Activated CD8-positive, alpha-beta T cell treated with anti-CD3 and anti-CD28 coated beads for 36 hours (primary cell): ENCODE measurements at regions of chr14 and their contacts with region 1.

Region 1: GRCh38 chr14:73058224-73058921 is at the start of gene RBM25:
- DNase-seq: peak; percentile 98
- ATAC-seq: peak; percentile 96
- H3K4me3 Mint-ChIP-seq: no peak within 1 kb of the TSS
- H3K27ac Mint-ChIP-seq: no peak within 1 kb of the TSS
- H3K4me1 Mint-ChIP-seq: peaks cover 29% of the 10 kb centered on the region
- H3K27me3 Mint-ChIP-seq: no peaks in the 10 kb centered on the region
- CTCF ChIP-seq: no peak
- total RNA-seq, gene RBM25: 101 to 104 TPM

Region 2: GRCh38 chr14:72812292-72812911 is 246.0 kb before region 1 on chr14:
- CTCF ChIA-PET with region 1: no interaction called
- POLR2A ChIA-PET with region 1: no interaction called
- intact Hi-C with region 1: no loop called
- DNase-seq: no peak
- ATAC-seq: no peak
- H3K4me3 Mint-ChIP-seq: no peak overlapping the region
- H3K27ac Mint-ChIP-seq: no peak overlapping the region
- H3K4me1 Mint-ChIP-seq: peaks cover 41% of the 10 kb centered on the region
- H3K27me3 Mint-ChIP-seq: no peaks in the 10 kb centered on the region
- CTCF ChIP-seq: no peak

Region 3: DNA sequence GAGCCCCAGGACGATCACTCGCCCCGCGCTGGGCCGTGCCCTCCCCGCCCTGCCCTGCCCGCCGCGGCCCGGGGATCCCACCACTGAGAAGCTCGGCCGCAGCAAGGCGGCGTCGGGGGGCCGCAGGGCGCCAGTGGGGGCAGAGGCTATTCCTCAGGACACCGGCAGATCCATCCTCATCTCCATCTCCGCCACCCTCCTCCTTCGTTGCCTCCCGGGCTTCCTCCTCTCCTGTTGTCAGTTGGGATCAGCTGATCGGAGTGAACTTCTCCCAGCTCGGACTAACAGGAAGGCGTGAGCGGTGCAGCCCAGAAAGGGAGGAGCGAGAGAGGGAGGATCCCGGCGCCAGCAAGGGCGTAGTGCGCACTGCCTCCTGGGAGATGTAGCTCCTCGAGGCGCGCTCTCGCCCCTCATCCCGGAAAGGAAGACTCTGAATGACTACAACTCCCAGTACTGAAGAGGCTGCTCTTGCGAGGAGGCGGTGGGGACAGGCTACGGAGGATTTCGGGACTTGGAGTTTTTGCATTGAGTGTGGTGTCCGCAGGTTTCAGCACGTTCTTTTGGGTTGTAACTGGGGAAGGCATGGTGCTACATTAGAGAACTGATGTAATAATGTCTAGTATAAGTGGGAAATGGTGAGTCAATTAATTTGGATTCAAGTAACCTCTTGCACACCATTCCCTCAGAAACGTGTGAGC is 31.4 kb before region 1 on chr14 and contains the start of gene ZFYVE1:
- CTCF ChIA-PET with region 1: interaction called, 4 read pairs
- POLR2A ChIA-PET with region 1: interaction called, 29 read pairs
- intact Hi-C with region 1: loop called (anchors 1 kb)
- DNase-seq: peak; percentile 97
- ATAC-seq: peak; percentile 99
- H3K4me3 Mint-ChIP-seq: peak within 1 kb of the TSS; percentile 91
- H3K27ac Mint-ChIP-seq: peak within 1 kb of the TSS; percentile 91
- H3K4me1 Mint-ChIP-seq: peaks cover 33% of the 10 kb centered on the region
- H3K27me3 Mint-ChIP-seq: no peaks in the 10 kb centered on the region
- CTCF ChIP-seq: no peak
- total RNA-seq, gene ZFYVE1: 7.2 to 10.4 TPM

Region 4: GRCh38 chr14:73069585-73069984 is 11.2 kb after region 1 on chr14:
- CTCF ChIA-PET with region 1: no interaction called
- POLR2A ChIA-PET with region 1: interaction called, 27 read pairs
- intact Hi-C with region 1: no loop called
- DNase-seq: no peak
- ATAC-seq: no peak
- H3K4me3 Mint-ChIP-seq: no peak overlapping the region
- H3K27ac Mint-ChIP-seq: no peak overlapping the region
- H3K4me1 Mint-ChIP-seq: peaks cover 28% of the 10 kb centered on the region
- H3K27me3 Mint-ChIP-seq: no peaks in the 10 kb centered on the region
- CTCF ChIP-seq: no peak

Region 5: GRCh38 chr14:73105050-73105449 is 46.7 kb after region 1 on chr14:
- CTCF ChIA-PET with region 1: interaction called, 5 read pairs
- POLR2A ChIA-PET with region 1: interaction called, 12 read pairs
- intact Hi-C with region 1: no loop called
- DNase-seq: no peak
- ATAC-seq: no peak
- H3K4me3 Mint-ChIP-seq: no peak overlapping the region
- H3K27ac Mint-ChIP-seq: no peak overlapping the region
- H3K4me1 Mint-ChIP-seq: no peaks in the 10 kb centered on the region
- H3K27me3 Mint-ChIP-seq: no peaks in the 10 kb centered on the region
- CTCF ChIP-seq: no peak

Region 6: DNA sequence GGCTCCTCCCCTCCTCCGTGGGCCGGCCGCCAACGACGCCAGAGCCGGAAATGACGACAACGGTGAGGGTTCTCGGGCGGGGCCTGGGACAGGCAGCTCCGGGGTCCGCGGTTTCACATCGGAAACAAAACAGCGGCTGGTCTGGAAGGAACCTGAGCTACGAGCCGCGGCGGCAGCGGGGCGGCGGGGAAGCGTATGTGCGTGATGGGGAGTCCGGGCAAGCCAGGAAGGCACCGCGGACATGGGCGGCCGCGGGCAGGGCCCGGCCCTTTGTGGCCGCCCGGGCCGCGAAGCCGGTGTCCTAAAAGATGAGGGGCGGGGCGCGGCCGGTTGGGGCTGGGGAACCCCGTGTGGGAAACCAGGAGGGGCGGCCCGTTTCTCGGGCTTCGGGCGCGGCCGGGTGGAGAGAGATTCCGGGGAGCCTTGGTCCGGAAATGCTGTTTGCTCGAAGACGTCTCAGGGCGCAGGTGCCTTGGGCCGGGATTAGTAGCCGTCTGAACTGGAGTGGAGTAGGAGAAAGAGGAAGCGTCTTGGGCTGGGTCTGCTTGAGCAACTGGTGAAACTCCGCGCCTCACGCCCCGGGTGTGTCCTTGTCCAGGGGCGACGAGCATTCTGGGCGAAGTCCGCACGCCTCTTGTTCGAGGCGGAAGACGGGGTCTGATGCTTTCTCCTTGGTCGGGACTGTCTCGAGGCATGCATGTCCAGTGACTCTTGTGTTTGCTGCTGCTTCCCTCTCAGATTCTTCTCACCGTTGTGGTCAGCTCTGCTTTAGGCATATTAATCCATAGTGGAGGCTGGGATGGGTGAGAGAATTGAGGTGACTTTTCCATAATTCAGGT is 78.2 kb after region 1 on chr14 and contains the start of gene PSEN1:
- CTCF ChIA-PET with region 1: interaction called, 4 read pairs
- POLR2A ChIA-PET with region 1: interaction called, 12 read pairs
- intact Hi-C with region 1: no loop called
- DNase-seq: peak; percentile 99
- ATAC-seq: peak; percentile 99
- H3K4me3 Mint-ChIP-seq: peak within 1 kb of the TSS; percentile 85
- H3K27ac Mint-ChIP-seq: peak within 1 kb of the TSS; percentile 94
- H3K4me1 Mint-ChIP-seq: peaks cover 23% of the 10 kb centered on the region
- H3K27me3 Mint-ChIP-seq: no peaks in the 10 kb centered on the region
- CTCF ChIP-seq: no peak
- total RNA-seq, gene PSEN1: 23.1 to 23.2 TPM